Activated CD8-positive, alpha-beta memory T cell treated with anti-CD3 and anti-CD28 coated beads, Interleukin-2, amount 10 ng/mL, durations not matched to agents 7 days and 5 days (primary cell): ENCODE measurements at regions of chr1 and their contacts with region 1.

Region 1: GRCh38 chr1:21368515-21369289 is 71.2 kb upstream of the NBPF3 start:
- DNase-seq: peak; percentile 63
- ATAC-seq: peak; percentile 67
- H3K4me3 Mint-ChIP-seq: no peak overlapping the region
- H3K27ac Mint-ChIP-seq: no peak overlapping the region
- H3K4me1 Mint-ChIP-seq: peaks cover 6% of the 10 kb centered on the region
- H3K27me3 Mint-ChIP-seq: no peaks in the 10 kb centered on the region

Region 2: GRCh38 chr1:21139601-21140000 is 229.1 kb before region 1 on chr1:
- CTCF ChIA-PET with region 1: no interaction called
- DNase-seq: no peak
- ATAC-seq: no peak
- H3K4me3 Mint-ChIP-seq: no peak overlapping the region
- H3K27ac Mint-ChIP-seq: no peak overlapping the region
- H3K4me1 Mint-ChIP-seq: no peaks in the 10 kb centered on the region
- H3K27me3 Mint-ChIP-seq: no peaks in the 10 kb centered on the region

Region 3: GRCh38 chr1:21216835-21217811 is 151.6 kb before region 1 on chr1:
- CTCF ChIA-PET with region 1: interaction called, 71 read pairs
- DNase-seq: peak; percentile 78
- ATAC-seq: peak; percentile 59
- H3K4me3 Mint-ChIP-seq: no peak overlapping the region
- H3K27ac Mint-ChIP-seq: no peak overlapping the region
- H3K4me1 Mint-ChIP-seq: no peaks in the 10 kb centered on the region
- H3K27me3 Mint-ChIP-seq: no peaks in the 10 kb centered on the region

Region 4: DNA sequence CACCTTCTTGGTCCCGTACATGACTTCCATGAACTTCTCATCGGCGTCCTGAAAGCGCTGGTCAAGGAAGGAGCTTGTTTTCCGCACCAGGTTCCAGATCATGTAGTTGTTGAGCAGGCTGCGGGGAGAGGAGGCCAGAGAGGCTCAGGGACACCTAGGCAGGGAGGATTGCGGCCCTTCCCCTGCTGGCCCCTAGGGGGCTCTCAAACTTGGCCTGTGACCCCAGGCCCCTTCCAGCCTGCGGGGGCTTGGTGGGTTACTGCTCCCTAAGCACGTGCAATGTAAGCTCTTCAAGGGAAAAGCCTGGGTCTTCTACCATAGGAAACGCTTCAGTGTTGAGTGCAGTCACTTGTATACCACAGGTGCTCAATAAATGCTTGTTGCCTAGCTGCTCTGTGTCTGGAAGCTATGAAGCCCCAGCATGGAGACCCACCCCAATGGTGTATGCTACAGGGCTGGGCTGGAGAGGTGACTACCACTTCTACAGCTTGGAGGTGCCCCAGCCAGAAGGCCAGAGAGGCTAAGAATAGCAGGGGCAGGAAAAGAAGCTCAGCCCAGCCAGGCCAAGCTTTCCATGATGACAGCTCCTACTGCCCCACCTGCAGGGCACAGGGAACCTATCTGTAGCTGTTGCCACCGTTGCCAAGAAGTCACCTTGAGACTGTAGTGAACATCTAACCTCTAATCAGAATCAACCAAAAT is 123.6 kb before region 1 on chr1:
- CTCF ChIA-PET with region 1: interaction called, 14 read pairs
- DNase-seq: no peak
- ATAC-seq: no peak
- H3K4me3 Mint-ChIP-seq: no peak overlapping the region
- H3K27ac Mint-ChIP-seq: no peak overlapping the region
- H3K4me1 Mint-ChIP-seq: peaks cover 2% of the 10 kb centered on the region
- H3K27me3 Mint-ChIP-seq: no peaks in the 10 kb centered on the region

Region 5: GRCh38 chr1:21355956-21356355 is 12.7 kb before region 1 on chr1:
- CTCF ChIA-PET with region 1: interaction called, 14 read pairs
- DNase-seq: no peak
- ATAC-seq: no peak
- H3K4me3 Mint-ChIP-seq: no peak overlapping the region
- H3K27ac Mint-ChIP-seq: no peak overlapping the region
- H3K4me1 Mint-ChIP-seq: no peaks in the 10 kb centered on the region
- H3K27me3 Mint-ChIP-seq: peaks cover 4% of the 10 kb centered on the region

Region 6: DNA sequence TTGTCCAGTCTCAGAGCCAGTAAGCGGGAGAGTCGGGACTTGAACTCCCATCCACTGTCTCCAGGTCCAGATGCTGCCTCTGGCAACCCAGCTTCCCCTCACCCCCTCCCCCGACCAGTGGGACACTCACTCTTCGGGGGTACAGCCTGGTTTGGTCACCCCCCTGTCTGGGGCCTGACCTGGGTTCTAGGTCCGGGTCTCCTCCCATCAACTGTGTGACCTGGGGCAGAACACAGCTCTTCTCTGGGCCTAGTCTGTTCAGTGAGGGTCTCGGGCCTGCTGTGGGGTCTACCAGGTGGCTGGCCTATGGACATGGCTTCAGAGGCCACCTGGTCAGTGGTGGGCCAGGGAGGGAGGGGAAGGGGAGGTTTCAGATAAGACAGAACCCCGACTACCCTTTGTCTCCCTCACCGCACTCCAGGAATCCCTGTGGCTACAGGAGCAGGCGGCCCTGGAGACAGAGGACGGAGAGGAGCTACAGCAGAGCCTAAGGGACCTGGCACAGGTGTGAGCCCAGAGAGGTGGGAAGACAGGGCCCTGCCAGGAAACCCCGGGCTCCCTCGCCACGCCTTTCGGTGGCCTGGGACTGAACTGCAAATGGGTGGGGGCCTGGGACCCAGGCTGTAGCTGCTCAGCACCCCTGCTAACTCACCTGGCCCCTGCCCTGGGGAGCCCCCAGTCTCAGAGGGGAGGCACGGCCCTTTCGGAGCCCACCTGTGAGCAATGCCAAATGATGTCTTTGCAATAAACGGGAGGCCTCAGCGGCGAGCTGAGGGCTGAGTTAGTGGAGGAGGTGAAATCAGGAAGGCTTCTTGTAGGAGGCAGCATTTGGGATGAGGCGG is 67.2 kb after region 1 on chr1:
- CTCF ChIA-PET with region 1: no interaction called
- DNase-seq: no peak
- ATAC-seq: no peak
- H3K4me3 Mint-ChIP-seq: no peak overlapping the region
- H3K27ac Mint-ChIP-seq: no peak overlapping the region
- H3K4me1 Mint-ChIP-seq: peaks cover 13% of the 10 kb centered on the region
- H3K27me3 Mint-ChIP-seq: peaks cover 33% of the 10 kb centered on the region

Region 7: GRCh38 chr1:21620496-21620895 is 251.8 kb after region 1 on chr1:
- CTCF ChIA-PET with region 1: no interaction called
- DNase-seq: no peak
- ATAC-seq: no peak
- H3K4me3 Mint-ChIP-seq: no peak overlapping the region
- H3K27ac Mint-ChIP-seq: no peak overlapping the region
- H3K4me1 Mint-ChIP-seq: peaks cover 4% of the 10 kb centered on the region
- H3K27me3 Mint-ChIP-seq: peaks cover 20% of the 10 kb centered on the region